GM12878 (cell line): ENCODE measurements at regions of chr1 and their contacts with region 1.

Region 1: DNA sequence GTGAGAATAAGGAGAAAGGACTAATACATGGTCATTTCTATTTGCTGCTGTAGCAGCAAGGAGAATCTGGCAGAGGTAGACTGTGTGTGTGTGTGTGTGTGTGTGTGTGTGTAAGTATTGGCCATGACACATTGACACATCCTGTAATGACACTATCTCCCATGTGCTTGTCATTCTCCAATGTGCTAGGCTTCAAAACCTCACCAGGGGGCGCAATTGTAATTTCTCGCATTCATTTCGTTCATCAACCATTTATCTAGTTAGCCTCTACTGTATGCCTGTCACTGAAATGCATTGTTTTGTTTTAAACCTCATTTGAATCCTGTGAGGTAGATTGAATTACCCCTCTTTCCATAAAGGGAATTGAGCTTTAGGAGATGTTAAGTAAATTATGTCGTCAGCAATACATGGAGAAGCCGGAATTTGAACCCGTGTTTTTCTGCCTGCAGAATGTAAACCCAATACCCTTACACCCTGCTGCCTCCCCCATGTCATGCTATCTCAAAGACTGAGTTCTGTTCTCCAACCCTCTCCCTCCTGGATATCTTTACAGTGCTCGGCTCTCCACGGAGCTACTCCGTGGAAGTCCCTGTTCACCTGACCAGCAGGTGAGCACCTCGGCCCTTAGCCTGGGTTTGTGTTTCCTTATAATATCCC is 100.8 kb downstream of the UCK2 start:
- DNase-seq: no peak
- ATAC-seq: peak; percentile 81
- H3K4me3 ChIP-seq: no peak overlapping the region
- H3K27ac ChIP-seq: no peak overlapping the region
- H3K4me1 ChIP-seq: no peaks in the 10 kb centered on the region; the same call in 1 of the 2 replicates
- H3K27me3 ChIP-seq: no peaks in the 10 kb centered on the region
- CTCF ChIP-seq: peak; percentile 71 to 78 (median 74)
- EP300 ChIP-seq: no peak
- POLR2A ChIP-seq: no peak
- RAD21 ChIP-seq: peak; percentile 87

Region 2: DNA sequence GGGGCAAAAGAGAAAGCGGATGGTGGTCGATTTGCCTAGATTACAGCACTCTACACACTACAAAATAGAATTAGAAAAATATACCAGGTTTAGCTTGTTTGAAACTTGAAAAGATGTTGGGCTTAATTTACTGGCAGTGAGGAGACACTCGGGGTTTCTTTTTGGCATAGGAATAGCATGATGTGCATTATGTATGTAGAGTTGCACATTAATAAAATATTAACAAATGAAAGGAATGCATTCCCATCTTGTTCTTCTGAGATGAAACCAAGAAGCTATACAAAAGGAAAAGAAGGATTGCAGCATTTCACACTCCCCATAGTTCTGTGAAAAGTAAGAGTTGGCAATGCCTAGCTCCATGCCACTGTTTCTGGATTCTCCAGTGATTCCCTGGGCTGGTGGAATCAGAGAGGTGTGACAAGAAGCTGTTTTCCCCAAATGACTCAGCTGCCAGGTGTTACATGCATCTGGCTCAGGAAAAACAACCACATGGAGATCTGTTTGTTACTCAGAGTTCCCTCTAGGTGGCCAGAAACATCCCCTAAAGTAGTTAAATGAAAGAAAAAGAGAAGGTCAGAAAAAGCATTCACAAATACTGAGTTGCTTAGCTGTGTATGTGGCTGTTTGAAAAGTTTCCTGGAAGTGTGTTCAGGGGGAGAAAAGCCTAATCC is 14.9 kb after region 1 on chr1:
- CTCF ChIA-PET with region 1: interaction called, 18 read pairs
- POLR2A ChIA-PET with region 1: no interaction called
- RAD21 ChIA-PET with region 1: no interaction called
- SMC1A ChIA-PET with region 1: interaction called, 3 read pairs
- in situ Hi-C with region 1: no loop called
- intact Hi-C with region 1: no loop called
- DNase-seq: no peak
- ATAC-seq: peak; percentile 73
- H3K4me3 ChIP-seq: no peak overlapping the region
- H3K27ac ChIP-seq: no peak overlapping the region
- H3K4me1 ChIP-seq: no peaks in the 10 kb centered on the region
- H3K27me3 ChIP-seq: no peaks in the 10 kb centered on the region; a peak in 1 of 4 replicates
- CTCF ChIP-seq: peak; percentile 2 to 15 (median 14); a peak in 1 of 6 replicates
- EP300 ChIP-seq: no peak
- POLR2A ChIP-seq: no peak
- RAD21 ChIP-seq: peak; percentile 34; the same call in 1 of the 2 replicates

Region 3: DNA sequence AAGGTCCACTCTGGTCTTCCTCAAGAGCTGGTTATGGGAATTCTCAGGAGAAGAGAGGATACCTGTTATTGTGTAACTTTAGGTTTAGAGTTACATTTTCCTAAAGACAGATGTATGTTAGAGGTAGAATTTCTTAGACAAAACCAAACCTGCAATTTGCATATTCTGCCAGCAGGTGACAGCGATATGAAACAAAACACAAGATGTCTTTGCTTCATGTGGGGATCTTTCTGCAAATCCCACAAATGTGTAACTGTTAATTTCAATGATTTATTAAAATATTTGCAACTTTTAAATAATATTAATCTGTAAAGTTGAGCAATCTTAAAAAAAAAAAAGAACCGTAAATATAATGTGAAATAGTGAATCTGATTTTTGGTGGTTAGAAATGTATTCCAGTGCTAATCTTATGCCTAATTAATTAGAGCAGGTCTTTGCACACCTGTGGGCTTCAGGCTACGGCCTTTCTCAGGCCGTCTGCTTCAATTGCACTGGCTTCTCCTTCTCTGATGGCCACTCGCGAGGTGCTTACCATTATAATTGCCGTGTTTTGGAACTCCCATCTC is 205.2 kb after region 1 on chr1:
- CTCF ChIA-PET with region 1: interaction called, 11 read pairs
- POLR2A ChIA-PET with region 1: no interaction called
- RAD21 ChIA-PET with region 1: no interaction called
- SMC1A ChIA-PET with region 1: interaction called, 3 read pairs
- in situ Hi-C with region 1: no loop called
- intact Hi-C with region 1: no loop called
- DNase-seq: no peak
- ATAC-seq: peak; percentile 60; the same call in 2 of the 3 replicates
- H3K4me3 ChIP-seq: no peak overlapping the region
- H3K27ac ChIP-seq: no peak overlapping the region
- H3K4me1 ChIP-seq: no peaks in the 10 kb centered on the region
- H3K27me3 ChIP-seq: no peaks in the 10 kb centered on the region
- CTCF ChIP-seq: peak; percentile 34 to 53 (median 52)
- EP300 ChIP-seq: no peak
- POLR2A ChIP-seq: no peak
- RAD21 ChIP-seq: peak; percentile 43

Region 4: DNA sequence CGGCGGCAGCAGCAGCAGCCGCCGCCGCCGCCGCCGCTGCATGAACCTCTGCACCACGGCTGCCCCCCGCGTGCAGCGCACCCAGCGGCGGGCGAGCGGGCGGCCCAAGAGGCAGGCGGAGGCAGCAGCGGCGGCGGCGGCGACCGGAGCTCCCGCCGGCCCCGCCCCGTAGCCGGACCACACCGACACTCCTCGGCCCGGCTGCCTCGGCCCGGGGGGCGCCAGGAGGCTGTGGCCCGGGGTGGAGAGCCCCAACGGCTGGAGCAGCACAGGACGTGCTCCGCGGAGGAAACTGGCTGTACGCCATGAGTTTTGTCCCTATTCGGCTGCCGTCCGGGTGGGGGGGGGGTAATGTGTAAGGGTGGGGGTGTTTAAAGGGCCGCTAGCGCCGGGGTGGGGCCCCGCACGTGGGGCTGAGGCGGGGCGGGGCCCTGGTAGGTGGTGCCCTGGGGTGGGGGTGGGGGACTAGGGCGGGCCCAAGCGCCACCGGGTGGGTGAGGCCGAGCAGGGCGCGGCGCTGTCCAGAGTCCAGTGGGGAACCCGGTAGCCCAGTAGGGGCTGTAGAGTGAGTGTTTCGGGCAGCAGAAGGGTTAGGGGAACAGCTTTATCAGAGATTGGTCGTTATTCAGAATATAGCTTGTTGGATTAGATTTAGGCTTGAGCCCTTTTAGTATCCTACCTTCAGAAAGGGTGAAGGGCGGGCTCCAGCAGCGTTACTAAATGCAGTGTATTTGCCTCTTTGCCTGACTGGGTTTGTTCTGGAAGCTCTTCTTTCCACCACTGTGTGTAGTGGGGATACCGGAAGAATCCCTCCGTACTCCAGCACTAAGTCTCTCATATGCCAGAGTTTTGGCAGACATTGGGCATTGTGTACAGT is 238.7 kb after region 1 on chr1 and contains the start of gene FAM78B:
- CTCF ChIA-PET with region 1: interaction called, 4 read pairs
- POLR2A ChIA-PET with region 1: no interaction called
- RAD21 ChIA-PET with region 1: interaction called, 4 read pairs
- SMC1A ChIA-PET with region 1: interaction called, 6 read pairs
- in situ Hi-C with region 1: no loop called
- intact Hi-C with region 1: loop called (anchors 2 kb)
- DNase-seq: peak; percentile 36
- ATAC-seq: peak; percentile 71
- H3K4me3 ChIP-seq: peak within 1 kb of the TSS; percentile 66
- H3K27ac ChIP-seq: peak within 1 kb of the TSS; percentile 36
- H3K4me1 ChIP-seq: peaks cover 40% of the 10 kb centered on the region
- H3K27me3 ChIP-seq: no peaks in the 10 kb centered on the region; a peak in 1 of 4 replicates
- CTCF ChIP-seq: peak; percentile 4 to 14 (median 5); a peak in 1 of 6 replicates
- EP300 ChIP-seq: no peak
- POLR2A ChIP-seq: no peak
- RAD21 ChIP-seq: no peak
- polyA plus RNA-seq, gene FAM78B: 0.31 to 0.40 TPM

Region 5: GRCh38 chr1:166258017-166258416 is 329.8 kb after region 1 on chr1:
- CTCF ChIA-PET with region 1: interaction called, 43 read pairs
- POLR2A ChIA-PET with region 1: no interaction called
- RAD21 ChIA-PET with region 1: interaction called, 20 read pairs
- SMC1A ChIA-PET with region 1: no interaction called
- in situ Hi-C with region 1: no loop called
- intact Hi-C with region 1: loop called (anchors 2 kb)
- DNase-seq: no peak
- ATAC-seq: peak; percentile 88
- H3K4me3 ChIP-seq: no peak overlapping the region
- H3K27ac ChIP-seq: no peak overlapping the region
- H3K4me1 ChIP-seq: no peaks in the 10 kb centered on the region
- H3K27me3 ChIP-seq: no peaks in the 10 kb centered on the region
- CTCF ChIP-seq: peak; percentile 16 to 47 (median 34); a peak in 4 of 6 replicates
- EP300 ChIP-seq: no peak
- POLR2A ChIP-seq: no peak
- RAD21 ChIP-seq: peak; percentile 53

Region 6: GRCh38 chr1:166432655-166433054 is 504.5 kb after region 1 on chr1:
- CTCF ChIA-PET with region 1: interaction called, 16 read pairs
- POLR2A ChIA-PET with region 1: no interaction called
- RAD21 ChIA-PET with region 1: interaction called, 6 read pairs
- SMC1A ChIA-PET with region 1: interaction called, 33 read pairs
- in situ Hi-C with region 1: loop called (anchors 5 kb)
- intact Hi-C with region 1: loop called (anchors 1 kb)
- DNase-seq: no peak
- ATAC-seq: no peak
- H3K4me3 ChIP-seq: no peak overlapping the region
- H3K27ac ChIP-seq: no peak overlapping the region
- H3K4me1 ChIP-seq: no peaks in the 10 kb centered on the region
- H3K27me3 ChIP-seq: no peaks in the 10 kb centered on the region
- CTCF ChIP-seq: no peak
- EP300 ChIP-seq: no peak
- POLR2A ChIP-seq: no peak
- RAD21 ChIP-seq: no peak

Region 7: DNA sequence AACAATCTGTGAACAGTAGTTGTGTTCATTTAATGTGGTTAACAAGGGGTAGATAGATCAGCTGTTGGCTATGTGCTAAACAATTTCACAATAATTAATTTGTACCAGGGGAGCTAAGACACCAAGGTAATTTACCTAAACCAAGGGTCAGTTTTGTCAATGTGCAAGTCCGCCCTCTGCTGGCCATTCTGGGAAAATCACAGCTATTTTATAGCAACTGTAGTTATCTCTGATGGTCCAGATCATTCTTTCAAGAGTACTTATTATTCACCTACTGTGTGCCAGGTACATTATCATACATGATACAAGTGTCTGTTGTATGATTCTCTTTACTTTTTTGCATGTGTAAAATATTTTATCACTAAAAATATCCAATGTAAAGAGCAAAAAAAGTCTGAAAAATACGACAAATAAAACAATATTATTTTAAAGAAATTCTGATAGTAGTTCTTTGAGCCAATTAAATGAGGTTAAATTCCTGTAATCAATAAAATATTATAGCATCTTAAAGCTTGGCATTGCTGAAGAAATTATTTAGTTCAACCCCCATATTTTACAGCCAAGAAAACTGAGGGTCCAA is 550.9 kb after region 1 on chr1:
- CTCF ChIA-PET with region 1: interaction called, 192 read pairs
- POLR2A ChIA-PET with region 1: interaction called, 3 read pairs
- RAD21 ChIA-PET with region 1: interaction called, 62 read pairs
- SMC1A ChIA-PET with region 1: interaction called, 52 read pairs
- in situ Hi-C with region 1: loop called (anchors 5 kb)
- intact Hi-C with region 1: loop called (anchors 1 kb)
- DNase-seq: no peak
- ATAC-seq: peak; percentile 76
- H3K4me3 ChIP-seq: no peak overlapping the region
- H3K27ac ChIP-seq: no peak overlapping the region
- H3K4me1 ChIP-seq: no peaks in the 10 kb centered on the region
- H3K27me3 ChIP-seq: no peaks in the 10 kb centered on the region; a peak in 1 of 4 replicates
- CTCF ChIP-seq: peak; percentile 65 to 81 (median 71)
- EP300 ChIP-seq: no peak
- POLR2A ChIP-seq: no peak
- RAD21 ChIP-seq: peak; percentile 67